ENCODE measurements at regions of chr18 and their contacts with region 1.

Region 1: DNA sequence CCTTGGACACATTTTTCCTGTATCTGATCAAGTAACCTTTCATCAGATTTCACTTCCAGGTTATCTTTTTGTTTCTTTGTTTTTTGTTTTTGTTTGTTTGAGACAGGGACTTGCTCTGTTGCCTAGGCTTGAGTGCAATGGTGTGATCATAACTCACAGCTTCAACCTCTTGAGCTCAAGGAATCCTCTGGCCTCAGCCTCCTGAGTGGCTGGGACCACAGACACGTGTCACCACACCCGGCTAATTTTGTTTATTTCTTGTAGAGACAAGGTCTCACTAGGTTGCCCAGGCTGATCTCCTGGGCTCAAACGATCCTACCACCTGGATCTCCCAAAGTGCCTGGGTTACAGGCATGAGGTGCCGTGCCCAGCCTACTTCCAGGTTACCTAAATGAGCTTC is 124.9 kb downstream of the L3MBTL4 start:
- DNase-seq: no peak
- ATAC-seq: no peak
- H3K4me3 ChIP-seq: no peak overlapping the region
- H3K4me3 Mint-ChIP-seq: no peak overlapping the region
- H3K27ac ChIP-seq: no peak overlapping the region
- H3K27ac Mint-ChIP-seq: no peak overlapping the region
- H3K4me1 ChIP-seq: no peaks in the 10 kb centered on the region
- H3K4me1 Mint-ChIP-seq: peaks cover 2% of the 10 kb centered on the region
- H3K27me3 ChIP-seq: no peaks in the 10 kb centered on the region
- H3K27me3 Mint-ChIP-seq: no peaks in the 10 kb centered on the region
- CTCF ChIP-seq: no peak

Region 2: DNA sequence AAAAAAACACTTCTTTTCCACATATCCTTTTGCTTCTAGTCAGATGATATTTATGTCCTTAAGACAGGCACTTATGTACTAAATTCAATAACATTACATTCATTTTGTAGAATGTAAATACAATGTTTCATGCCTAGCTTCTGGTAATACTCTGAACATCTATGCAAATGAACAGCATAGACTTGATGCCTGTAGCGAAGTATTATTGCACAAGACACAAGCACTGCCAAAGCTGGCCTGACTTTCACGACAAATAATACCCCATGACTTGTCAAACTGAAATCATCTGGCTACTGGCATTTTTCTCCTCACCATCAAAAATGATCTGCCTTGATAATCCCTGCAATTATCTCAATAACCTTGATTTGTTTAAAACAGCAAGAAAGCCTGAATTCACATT is 23.6 kb after region 1 on chr18:
- CTCF ChIA-PET with region 1: no interaction called
- POLR2A ChIA-PET with region 1: no interaction called
- intact Hi-C with region 1: loop called in 1 of 2 experiments (anchors 2 kb)
- DNase-seq: no peak
- ATAC-seq: no peak
- H3K4me3 ChIP-seq: no peak overlapping the region
- H3K4me3 Mint-ChIP-seq: no peak overlapping the region
- H3K27ac ChIP-seq: no peak overlapping the region
- H3K27ac Mint-ChIP-seq: no peak overlapping the region
- H3K4me1 ChIP-seq: no peaks in the 10 kb centered on the region
- H3K4me1 Mint-ChIP-seq: no peaks in the 10 kb centered on the region
- H3K27me3 ChIP-seq: no peaks in the 10 kb centered on the region
- H3K27me3 Mint-ChIP-seq: no peaks in the 10 kb centered on the region
- CTCF ChIP-seq: no peak

Region 3: GRCh38 chr18:6891788-6892187 is 601.9 kb after region 1 on chr18:
- CTCF ChIA-PET with region 1: no interaction called
- POLR2A ChIA-PET with region 1: no interaction called
- intact Hi-C with region 1: no loop called
- DNase-seq: no peak
- ATAC-seq: no peak
- H3K4me3 ChIP-seq: no peak overlapping the region
- H3K4me3 Mint-ChIP-seq: no peak overlapping the region
- H3K27ac ChIP-seq: no peak overlapping the region
- H3K27ac Mint-ChIP-seq: no peak overlapping the region
- H3K4me1 ChIP-seq: no peaks in the 10 kb centered on the region
- H3K4me1 Mint-ChIP-seq: no peaks in the 10 kb centered on the region
- H3K27me3 ChIP-seq: no peaks in the 10 kb centered on the region
- H3K27me3 Mint-ChIP-seq: no peaks in the 10 kb centered on the region
- CTCF ChIP-seq: no peak

Measured in CD8-positive, alpha-beta T cell (primary cell).